Activated T-helper 2 cell treated with anti-CD3 and anti-CD28 coated beads, Interferon-gamma antibody, Interleukin-2, Interleukin-4, amounts not matched to agents 10 μg/mL and 5 μg/mL and 100 μg/mL, durations not matched to agents 14 hours and 24 hours and 36 hours (primary cell): ENCODE measurements at regions of chr14 and their contacts with region 1.

Region 1: DNA sequence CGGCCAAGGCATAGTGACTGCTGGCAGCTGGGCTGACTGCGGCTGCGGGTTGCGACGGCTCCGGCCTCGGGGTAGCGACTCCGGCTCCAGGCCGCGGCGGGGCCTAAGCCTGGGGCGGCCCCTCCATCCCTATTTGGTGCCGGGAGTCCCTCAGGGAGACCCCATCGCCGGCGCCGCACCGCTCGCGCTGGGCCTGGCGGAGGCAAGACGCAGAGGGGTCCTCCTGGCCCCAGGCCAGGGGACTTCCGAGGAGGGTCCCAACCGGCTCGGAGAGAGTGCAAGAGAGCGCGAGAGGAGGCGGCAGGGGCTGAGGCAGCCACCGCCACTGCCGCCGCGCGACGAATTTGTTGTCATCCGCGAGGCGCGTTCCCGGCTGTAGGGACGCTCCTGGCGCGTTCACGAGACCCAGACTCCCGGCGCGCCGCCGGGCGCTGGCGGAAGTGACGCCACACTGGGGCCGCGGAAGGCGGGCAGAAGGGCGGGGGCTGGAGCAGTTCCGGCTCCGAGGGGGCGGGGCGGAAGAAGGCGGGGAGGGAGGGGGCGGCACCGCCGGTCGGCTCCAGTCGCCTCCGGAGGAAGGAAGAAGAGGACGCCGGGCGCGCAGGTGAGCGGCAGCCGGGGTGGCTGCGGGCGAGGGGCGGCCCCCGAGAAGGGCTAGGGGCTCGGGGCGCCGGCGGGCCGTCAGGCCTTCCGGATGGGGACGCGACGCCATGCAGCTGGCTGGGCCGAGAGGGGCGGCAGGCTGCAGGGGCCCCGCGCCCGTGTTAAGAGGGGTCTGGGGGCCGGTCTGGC is at the starts of genes ATG2B and GSKIP:
- DNase-seq: peak; percentile 96
- H3K4me3 Mint-ChIP-seq: peak within 1 kb of the TSS; percentile 95
- H3K27ac Mint-ChIP-seq: peak within 1 kb of the TSS; percentile 92
- H3K4me1 Mint-ChIP-seq: peaks cover 36% of the 10 kb centered on the region
- H3K27me3 Mint-ChIP-seq: no peaks in the 10 kb centered on the region
- total RNA-seq, gene ATG2B: 18.3 and 23.8 TPM in 2 replicates
- total RNA-seq, gene GSKIP: 21.3 and 21.4 TPM in 2 replicates

Region 2: GRCh38 chr14:96320605-96321004 is 42.6 kb before region 1 on chr14:
- intact Hi-C with region 1: loop called (anchors 5 kb)
- DNase-seq: no peak
- H3K4me3 Mint-ChIP-seq: no peak overlapping the region
- H3K27ac Mint-ChIP-seq: no peak overlapping the region
- H3K4me1 Mint-ChIP-seq: peaks cover 4% of the 10 kb centered on the region
- H3K27me3 Mint-ChIP-seq: no peaks in the 10 kb centered on the region

Region 3: DNA sequence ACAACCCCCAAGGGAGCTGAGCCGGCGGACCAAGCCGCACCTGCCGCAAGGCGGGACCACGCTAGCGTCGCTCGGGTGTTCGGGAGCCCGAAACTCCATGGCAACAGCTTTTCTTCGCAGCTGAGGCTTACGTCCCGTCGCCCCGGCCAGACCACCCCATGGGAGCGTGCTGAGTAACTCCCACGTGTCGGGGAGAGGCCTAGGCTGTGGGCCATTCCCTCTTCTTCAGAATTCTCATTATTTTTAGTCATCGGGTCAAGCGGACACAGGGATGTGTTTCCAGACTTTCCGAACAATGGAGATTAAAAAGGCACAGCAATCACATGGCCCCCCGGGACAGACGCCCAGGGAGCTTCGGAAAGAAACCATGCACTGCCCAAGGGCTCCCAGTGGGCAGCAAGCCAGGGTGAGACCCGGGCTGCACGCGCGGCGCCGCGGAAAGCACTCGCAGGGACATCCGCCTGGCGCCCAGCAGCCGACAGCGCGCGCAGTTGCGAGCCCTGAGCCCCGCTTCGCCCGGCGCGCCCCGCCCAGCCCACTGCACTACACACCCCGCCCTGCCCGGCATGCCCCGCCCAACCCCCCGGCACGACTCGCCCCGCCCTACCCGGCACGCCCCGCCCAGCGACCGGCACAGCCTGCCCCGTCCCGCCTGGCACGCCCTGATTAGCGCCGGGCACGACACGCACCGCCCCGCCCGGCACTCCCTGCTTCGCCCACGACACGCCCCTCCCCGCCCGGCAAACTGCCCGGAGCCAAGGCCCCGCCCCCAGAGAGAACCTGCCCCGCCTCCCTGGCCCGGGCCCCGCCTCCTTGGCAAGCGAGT is 28.3 kb after region 1 on chr14:
- intact Hi-C with region 1: loop called (anchors 1 kb)
- DNase-seq: peak; percentile 99
- H3K4me3 Mint-ChIP-seq: peak overlapping the region; percentile 91
- H3K27ac Mint-ChIP-seq: no peak overlapping the region
- H3K4me1 Mint-ChIP-seq: peaks cover 1% of the 10 kb centered on the region
- H3K27me3 Mint-ChIP-seq: peaks cover 11% of the 10 kb centered on the region

Region 4: GRCh38 chr14:96501742-96502617 is 138.8 kb after region 1 on chr14 and contains the start of gene PAPOLA:
- intact Hi-C with region 1: loop called (anchors 1 kb)
- DNase-seq: peak; percentile 94
- H3K4me3 Mint-ChIP-seq: peak within 1 kb of the TSS; percentile 98
- H3K27ac Mint-ChIP-seq: peak within 1 kb of the TSS; percentile 99
- H3K4me1 Mint-ChIP-seq: peaks cover 50% of the 10 kb centered on the region
- H3K27me3 Mint-ChIP-seq: peaks cover 5% of the 10 kb centered on the region
- total RNA-seq, gene PAPOLA: 211 and 217 TPM in 2 replicates